Activated CD4-positive, alpha-beta T cell treated with anti-CD3 and anti-CD28 coated beads, Interleukin-2, amount 10 ng/mL, durations not matched to agents 24 days and 14 days (primary cell): ENCODE measurements at regions of chr10 and their contacts with region 1.

Region 1: GRCh38 chr10:11165591-11166543 is 148.2 kb downstream of the CELF2 start:
- DNase-seq: peak; percentile 92
- H3K4me3 Mint-ChIP-seq: no peak overlapping the region
- H3K27ac Mint-ChIP-seq: peak overlapping the region; percentile 96
- H3K4me1 Mint-ChIP-seq: peaks cover 40% of the 10 kb centered on the region
- H3K27me3 Mint-ChIP-seq: no peaks in the 10 kb centered on the region

Region 2: GRCh38 chr10:11017570-11018431 is 148.1 kb before region 1 on chr10 and contains the start of gene CELF2:
- intact Hi-C with region 1: loop called (anchors 5 kb)
- DNase-seq: peak; percentile 85
- H3K4me3 Mint-ChIP-seq: peak within 1 kb of the TSS; percentile 74
- H3K27ac Mint-ChIP-seq: peak within 1 kb of the TSS; percentile 27
- H3K4me1 Mint-ChIP-seq: peaks cover 15% of the 10 kb centered on the region
- H3K27me3 Mint-ChIP-seq: peaks cover 78% of the 10 kb centered on the region
- total RNA-seq, gene CELF2: 95.5 and 98.4 TPM in 2 replicates

Region 3: GRCh38 chr10:11150231-11150731 is 15.6 kb before region 1 on chr10:
- intact Hi-C with region 1: loop called (anchors 1 kb)
- DNase-seq: peak; percentile 89
- H3K4me3 Mint-ChIP-seq: peak overlapping the region; percentile 86
- H3K27ac Mint-ChIP-seq: peak overlapping the region; percentile 98
- H3K4me1 Mint-ChIP-seq: peaks cover 87% of the 10 kb centered on the region
- H3K27me3 Mint-ChIP-seq: no peaks in the 10 kb centered on the region

Region 4: GRCh38 chr10:11186374-11186773 is 20.5 kb after region 1 on chr10:
- intact Hi-C with region 1: no loop called
- DNase-seq: no peak
- H3K4me3 Mint-ChIP-seq: peak overlapping the region; percentile 24
- H3K27ac Mint-ChIP-seq: peak overlapping the region; percentile 18
- H3K4me1 Mint-ChIP-seq: peaks cover 82% of the 10 kb centered on the region
- H3K27me3 Mint-ChIP-seq: no peaks in the 10 kb centered on the region

Region 5: GRCh38 chr10:11209830-11210181 is 43.9 kb after region 1 on chr10:
- intact Hi-C with region 1: loop called (anchors 1 kb)
- DNase-seq: peak; percentile 64
- H3K4me3 Mint-ChIP-seq: peak overlapping the region; percentile 74
- H3K27ac Mint-ChIP-seq: peak overlapping the region; percentile 97
- H3K4me1 Mint-ChIP-seq: peaks cover 86% of the 10 kb centered on the region
- H3K27me3 Mint-ChIP-seq: no peaks in the 10 kb centered on the region

Region 6: GRCh38 chr10:11270135-11270857 is 104.4 kb after region 1 on chr10:
- intact Hi-C with region 1: loop called (anchors 5 kb)
- DNase-seq: peak; percentile 87
- H3K4me3 Mint-ChIP-seq: no peak overlapping the region
- H3K27ac Mint-ChIP-seq: peak overlapping the region; percentile 78
- H3K4me1 Mint-ChIP-seq: peaks cover 50% of the 10 kb centered on the region
- H3K27me3 Mint-ChIP-seq: no peaks in the 10 kb centered on the region